ENCODE measurements at regions of chr5 and their contacts with region 1.

Region 1: GRCh38 chr5:168047043-168047668 is 244.3 kb upstream of the WWC1 start:
- DNase-seq: peak; percentile 61 to 68
- ATAC-seq: peak; percentile 91 to 96
- H3K4me3 ChIP-seq: no peak overlapping the region
- H3K27ac ChIP-seq: no peak overlapping the region
- H3K4me1 ChIP-seq: 0 out of 3 replicates have a peak, but pooled peaks cover 4% of the 10 kb centered on the region
- CTCF ChIP-seq: peak; percentile 78
- EP300 ChIP-seq: no peak
- POLR2A ChIP-seq: no peak
- RAD21 ChIP-seq: peak; percentile 89

Region 2: GRCh38 chr5:167576126-167576525 is 471.0 kb before region 1 on chr5:
- CTCF ChIA-PET with region 1: interaction called, 43 read pairs
- POLR2A ChIA-PET with region 1: no interaction called
- DNase-seq: no peak
- ATAC-seq: no peak
- H3K4me3 ChIP-seq: no peak overlapping the region
- H3K27ac ChIP-seq: no peak overlapping the region
- H3K4me1 ChIP-seq: 0 out of 3 replicates have a peak, but pooled peaks cover 4% of the 10 kb centered on the region
- CTCF ChIP-seq: peak; percentile 35; the same call in 2 of the 3 replicates
- EP300 ChIP-seq: no peak
- POLR2A ChIP-seq: no peak
- RAD21 ChIP-seq: peak; percentile 38 to 56

Region 3: GRCh38 chr5:167587772-167588437 is 459.3 kb before region 1 on chr5:
- CTCF ChIA-PET with region 1: interaction called, 43 read pairs
- POLR2A ChIA-PET with region 1: no interaction called
- DNase-seq: peak; percentile 40 to 56
- ATAC-seq: peak; percentile 93 to 97
- H3K4me3 ChIP-seq: no peak overlapping the region
- H3K27ac ChIP-seq: no peak overlapping the region
- H3K4me1 ChIP-seq: peaks cover 14% of the 10 kb centered on the region
- CTCF ChIP-seq: peak; percentile 33
- EP300 ChIP-seq: no peak
- POLR2A ChIP-seq: no peak
- RAD21 ChIP-seq: peak; percentile 34 to 50; a peak in 2 of 5 replicates

Region 4: GRCh38 chr5:168057905-168058304 is 10.7 kb after region 1 on chr5:
- CTCF ChIA-PET with region 1: interaction called, 16 read pairs
- POLR2A ChIA-PET with region 1: no interaction called
- DNase-seq: peak in 1 of 2 experiments; percentile 16
- ATAC-seq: no peak
- H3K4me3 ChIP-seq: no peak overlapping the region
- H3K27ac ChIP-seq: no peak overlapping the region
- H3K4me1 ChIP-seq: no peaks in the 10 kb centered on the region
- CTCF ChIP-seq: no peak
- EP300 ChIP-seq: no peak
- POLR2A ChIP-seq: no peak
- RAD21 ChIP-seq: no peak

Region 5: GRCh38 chr5:168219515-168220410 is 172.6 kb after region 1 on chr5:
- CTCF ChIA-PET with region 1: interaction called, 16 read pairs
- POLR2A ChIA-PET with region 1: no interaction called
- DNase-seq: peak; percentile 80 to 94
- ATAC-seq: peak; percentile 77 to 89
- H3K4me3 ChIP-seq: peak overlapping the region; percentile 32; the same call in 2 of the 3 replicates
- H3K27ac ChIP-seq: peak overlapping the region; percentile 40 to 43; a peak in 2 of 6 replicates
- H3K4me1 ChIP-seq: 0 out of 3 replicates have a peak, but pooled peaks cover 3% of the 10 kb centered on the region
- CTCF ChIP-seq: peak; percentile 91
- EP300 ChIP-seq: no peak
- POLR2A ChIP-seq: no peak
- RAD21 ChIP-seq: peak; percentile 89 to 95

Region 6: DNA sequence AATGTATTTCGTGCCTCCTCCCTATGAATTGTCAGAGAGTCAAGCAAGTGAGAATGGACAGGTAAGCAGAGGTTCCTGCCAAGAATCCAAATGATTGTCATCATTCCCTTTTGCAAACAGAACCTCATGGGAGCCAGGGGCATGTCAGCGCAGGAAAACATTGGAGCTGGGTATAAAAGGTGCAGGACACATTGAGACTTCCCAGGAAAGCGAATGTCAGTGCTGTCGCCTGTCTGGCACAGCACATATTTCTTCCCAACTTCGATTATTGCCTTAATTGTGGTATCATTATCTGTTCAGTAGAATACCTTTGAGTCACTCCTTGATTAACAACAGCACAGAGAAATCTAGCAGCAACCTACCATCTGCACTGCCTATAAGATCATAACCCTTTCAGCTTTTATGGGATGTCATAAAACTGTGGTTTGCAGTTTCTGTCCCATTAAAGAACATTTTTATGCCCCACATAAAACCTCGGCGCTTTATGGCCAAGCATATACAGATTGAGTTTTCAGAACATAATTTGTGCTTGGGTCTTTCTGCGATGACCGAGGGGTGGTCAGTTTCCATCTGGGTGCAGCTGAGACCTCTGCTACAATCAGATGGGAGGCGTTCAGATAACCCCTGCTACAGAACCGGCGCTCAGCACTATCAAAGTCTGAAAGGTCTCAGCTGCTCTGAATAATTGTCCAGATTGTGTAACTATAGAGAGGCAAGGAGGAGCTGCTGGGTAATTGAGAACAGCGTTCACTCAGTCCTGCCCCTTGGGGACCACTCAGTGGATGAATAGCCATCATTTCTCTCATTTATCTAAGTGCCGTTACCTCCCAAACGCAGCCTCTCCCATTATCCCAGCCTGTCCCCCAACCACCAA is 213.4 kb after region 1 on chr5:
- CTCF ChIA-PET with region 1: no interaction called
- POLR2A ChIA-PET with region 1: no interaction called
- DNase-seq: no peak
- ATAC-seq: no peak
- H3K4me3 ChIP-seq: no peak overlapping the region
- H3K27ac ChIP-seq: no peak overlapping the region
- H3K4me1 ChIP-seq: no peaks in the 10 kb centered on the region
- CTCF ChIP-seq: no peak
- EP300 ChIP-seq: no peak
- POLR2A ChIP-seq: no peak
- RAD21 ChIP-seq: no peak

Measured in A549 (cell line).